ENCODE measurements at regions of chr20 and their contacts with region 1.

Region 1: DNA sequence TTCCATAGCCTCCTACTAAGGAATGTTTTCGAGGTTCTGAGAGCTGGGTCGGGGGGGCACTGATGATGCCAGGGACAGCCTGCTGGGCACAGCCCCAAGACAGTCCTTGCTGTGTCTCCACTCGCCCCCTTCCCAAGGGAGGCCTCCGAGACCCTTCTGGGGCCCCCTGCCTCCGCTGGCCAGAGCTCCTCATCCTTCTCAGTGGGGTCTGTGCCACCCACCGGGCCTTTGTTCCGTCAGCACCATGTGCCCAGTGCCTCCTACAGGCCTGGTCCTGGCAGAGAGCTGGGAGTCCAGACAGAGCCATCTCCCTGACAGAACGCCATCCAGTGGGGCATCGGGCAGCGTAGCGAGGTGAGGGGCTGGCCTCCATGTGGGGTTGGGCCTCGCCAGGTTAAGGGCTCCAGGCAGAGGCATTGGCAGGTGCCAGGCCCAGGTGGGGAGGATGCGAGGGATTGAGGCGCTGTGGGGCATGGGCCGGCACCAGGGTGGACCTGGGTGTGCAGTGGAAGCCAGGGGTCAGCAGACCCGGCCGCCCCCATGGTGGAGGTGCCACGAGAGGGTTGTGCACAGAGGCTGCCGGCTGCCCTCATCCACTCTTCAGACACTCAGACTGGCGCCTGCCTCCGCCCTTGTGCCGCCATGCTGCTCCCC is 13.3 kb downstream of the RBM38 start:
- DNase-seq: no peak
- ATAC-seq: no peak
- H3K4me3 ChIP-seq: no peak overlapping the region
- H3K27ac ChIP-seq: no peak overlapping the region
- H3K4me1 ChIP-seq: no peaks in the 10 kb centered on the region
- H3K27me3 ChIP-seq: no peaks in the 10 kb centered on the region
- CTCF ChIP-seq: no peak

Region 2: GRCh38 chr20:57013718-57014117 is 390.8 kb before region 1 on chr20:
- CTCF ChIA-PET with region 1: no interaction called
- POLR2A ChIA-PET with region 1: no interaction called
- intact Hi-C with region 1: no loop called
- DNase-seq: peak; percentile 60
- ATAC-seq: peak; percentile 37
- H3K4me3 ChIP-seq: peak overlapping the region; percentile 23; the same call in 1 of the 2 replicates
- H3K27ac ChIP-seq: no peak overlapping the region
- H3K4me1 ChIP-seq: peaks cover 4% of the 10 kb centered on the region; the same call in 1 of the 2 replicates
- H3K27me3 ChIP-seq: peaks cover 6% of the 10 kb centered on the region; the same call in 1 of the 2 replicates
- CTCF ChIP-seq: no peak

Region 3: GRCh38 chr20:57133926-57134650 is 270.5 kb before region 1 on chr20:
- CTCF ChIA-PET with region 1: no interaction called
- POLR2A ChIA-PET with region 1: no interaction called
- intact Hi-C with region 1: no loop called
- DNase-seq: no peak
- ATAC-seq: no peak
- H3K4me3 ChIP-seq: no peak overlapping the region
- H3K27ac ChIP-seq: no peak overlapping the region
- H3K4me1 ChIP-seq: no peaks in the 10 kb centered on the region
- H3K27me3 ChIP-seq: peaks cover 92% of the 10 kb centered on the region
- CTCF ChIP-seq: no peak

Region 4: GRCh38 chr20:57317789-57318371 is 86.7 kb before region 1 on chr20:
- CTCF ChIA-PET with region 1: no interaction called
- POLR2A ChIA-PET with region 1: no interaction called
- intact Hi-C with region 1: no loop called
- DNase-seq: no peak
- ATAC-seq: no peak
- H3K4me3 ChIP-seq: no peak overlapping the region
- H3K27ac ChIP-seq: no peak overlapping the region
- H3K4me1 ChIP-seq: no peaks in the 10 kb centered on the region
- H3K27me3 ChIP-seq: peaks cover 74% of the 10 kb centered on the region
- CTCF ChIP-seq: no peak

Region 5: DNA sequence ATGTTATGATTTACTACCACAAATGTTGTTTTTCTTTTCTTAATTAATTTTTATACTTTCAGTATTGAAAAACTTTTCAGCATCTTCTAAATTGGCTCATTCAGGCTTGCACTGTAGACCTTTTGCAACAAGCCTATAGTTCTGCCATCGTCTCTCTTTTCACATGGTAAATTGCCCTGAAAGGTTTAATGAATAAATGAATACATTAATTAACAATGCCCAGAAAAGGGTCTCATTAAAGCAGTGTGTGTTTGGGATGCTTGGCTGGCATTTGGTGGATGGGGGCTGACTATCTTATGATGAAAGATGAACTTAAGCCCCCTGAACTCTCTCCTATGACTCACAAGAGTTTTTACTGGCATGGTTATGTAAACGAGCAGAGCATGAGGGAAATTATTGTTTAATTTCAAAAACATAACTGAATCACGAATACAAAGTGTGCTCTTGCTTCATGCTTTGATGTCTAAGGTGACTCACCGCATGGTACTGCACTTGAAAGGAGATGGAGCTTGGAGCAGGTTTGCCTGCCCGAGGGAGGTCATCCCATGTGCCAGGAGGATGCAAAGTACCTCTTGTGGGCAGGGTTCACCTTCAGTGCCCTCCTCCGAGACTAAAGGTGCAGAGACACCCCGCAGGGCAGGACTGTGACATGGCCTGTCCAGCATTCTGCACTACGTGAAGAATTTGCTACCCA is 142.6 kb after region 1 on chr20:
- CTCF ChIA-PET with region 1: interaction called, 13 read pairs
- POLR2A ChIA-PET with region 1: no interaction called
- intact Hi-C with region 1: no loop called
- DNase-seq: peak; percentile 89
- ATAC-seq: peak; percentile 80
- H3K4me3 ChIP-seq: no peak overlapping the region
- H3K27ac ChIP-seq: peak overlapping the region; percentile 51
- H3K4me1 ChIP-seq: peaks cover 27% of the 10 kb centered on the region
- H3K27me3 ChIP-seq: peaks cover 14% of the 10 kb centered on the region; the same call in 1 of the 2 replicates
- CTCF ChIP-seq: no peak

Measured in PC-3 (cell line).